SK-MEL-5 (cell line): ENCODE measurements at regions of chr5 and their contacts with region 1.

Region 1: DNA sequence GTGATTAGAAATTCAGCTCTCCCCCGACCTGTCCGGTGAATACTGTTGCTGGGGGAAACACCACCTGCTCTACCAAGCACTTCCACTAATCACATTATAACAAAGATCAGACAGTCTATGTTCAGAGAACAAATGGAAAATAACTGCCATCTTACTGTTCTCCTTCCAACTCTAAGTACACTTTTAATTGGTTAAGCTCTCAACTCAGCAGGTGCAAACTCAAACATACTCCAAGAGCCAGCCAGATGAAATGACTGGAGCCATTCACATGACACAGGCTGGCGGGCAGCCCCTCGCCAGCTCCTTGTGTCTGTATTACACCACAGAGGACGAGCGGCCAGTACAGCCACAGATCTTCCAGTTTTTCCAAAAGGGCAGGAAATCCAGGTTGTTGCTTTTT is 16.1 kb downstream of the LIFR start:
- DNase-seq: no peak

Region 2: DNA sequence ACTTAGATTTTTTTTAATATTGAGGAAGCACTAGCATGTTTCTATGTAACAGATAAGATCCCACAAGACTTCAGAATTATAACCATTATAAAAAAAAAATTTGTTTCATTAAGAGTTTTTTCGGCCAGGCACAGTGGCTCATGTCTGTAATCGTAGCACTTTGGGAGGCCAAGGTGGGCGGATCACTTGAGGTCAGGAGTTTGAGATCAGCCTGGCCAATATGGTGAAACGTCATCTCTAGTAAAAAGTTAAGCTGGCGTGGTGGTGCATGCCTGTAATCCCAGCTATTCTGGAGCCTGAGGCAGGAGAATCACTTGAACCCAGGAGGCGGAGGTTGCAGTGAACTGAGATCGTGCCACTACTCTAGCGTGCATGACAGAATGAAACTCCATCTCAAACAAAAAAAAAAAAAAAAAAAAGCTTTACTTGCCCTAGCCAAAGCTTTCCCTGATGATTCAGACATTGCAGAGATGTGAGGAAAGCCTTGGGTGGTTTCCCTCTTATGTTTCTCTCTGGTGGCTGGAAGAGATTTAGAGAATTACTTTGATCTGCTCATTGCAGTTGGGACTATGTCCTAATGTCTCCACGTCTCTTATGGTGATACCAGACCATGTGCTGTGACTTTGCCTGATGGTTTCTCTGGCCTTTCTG is 216.5 kb before region 1 on chr5:
- in situ Hi-C with region 1: no loop called
- DNase-seq: no peak

Region 3: GRCh38 chr5:38441453-38442246 is 98.7 kb before region 1 on chr5:
- in situ Hi-C with region 1: loop called (anchors 25 kb)
- DNase-seq: peak; percentile 97

Region 4: DNA sequence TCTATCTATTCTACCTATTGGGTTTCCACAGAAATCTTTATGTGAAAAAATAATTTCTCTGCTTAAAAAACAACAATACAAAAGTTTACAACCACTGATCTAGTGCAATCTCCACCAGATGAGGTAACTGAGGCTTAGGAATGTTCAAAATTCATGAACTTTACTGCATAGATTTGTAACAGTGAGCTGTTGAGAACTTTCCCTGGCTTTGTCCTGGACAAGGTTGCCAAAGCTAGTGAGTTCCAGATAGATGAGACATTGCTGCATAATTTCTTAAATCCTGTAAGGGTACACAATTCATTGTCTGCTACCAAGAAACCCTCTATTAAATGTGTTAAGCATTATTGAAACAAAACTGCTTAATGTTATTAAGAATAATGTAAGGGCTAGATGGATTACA is 408.2 kb after region 1 on chr5:
- in situ Hi-C with region 1: no loop called
- DNase-seq: no peak